ENCODE measurements at regions of chr15 and their contacts with region 1.

Region 1: DNA sequence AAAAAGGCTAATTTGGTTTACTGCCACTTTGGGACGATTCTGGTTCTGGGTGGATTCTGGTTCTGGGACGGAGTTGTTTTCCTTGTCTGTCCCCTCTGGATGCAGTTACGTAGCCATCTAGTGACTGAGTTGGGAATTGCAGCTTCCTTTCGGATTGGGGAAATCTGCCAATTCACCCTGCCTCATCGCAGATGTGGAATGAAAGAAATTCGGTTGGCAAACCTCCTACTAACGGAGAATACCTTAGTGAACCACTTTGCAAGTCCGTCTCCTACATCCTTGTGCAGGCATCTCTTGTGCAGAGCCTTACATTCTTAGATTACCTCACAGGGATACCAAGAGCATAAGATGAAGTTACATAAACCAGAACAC is 31.5 kb upstream of the AP4E1 start:
- DNase-seq: peak; percentile 86
- H3K4me3 ChIP-seq: peak overlapping the region; percentile 13 to 47 (median 36)
- H3K27ac ChIP-seq: peak overlapping the region in 3 of 4 donors; percentile 35 to 62 (median 54)
- H3K4me1 ChIP-seq: peaks cover 0 to 11% (median 3%) of the 10 kb centered on the region in 4 donors
- H3K27me3 ChIP-seq: no peaks in the 10 kb centered on the region
- CTCF ChIP-seq: peak; percentile 89 to 97 (median 94)
- EP300 ChIP-seq: no peak
- POLR2A ChIP-seq: no peak

Region 2: GRCh38 chr15:50675536-50676144 is 201.3 kb before region 1 on chr15:
- intact Hi-C with region 1: loop called (anchors 2 kb)
- DNase-seq: no peak
- H3K4me3 ChIP-seq: no peak overlapping the region
- H3K27ac ChIP-seq: no peak overlapping the region
- H3K4me1 ChIP-seq: peaks cover 0 to 25% (median 12%) of the 10 kb centered on the region in 4 donors
- H3K27me3 ChIP-seq: no peaks in the 10 kb centered on the region
- CTCF ChIP-seq: peak; percentile 34 to 73 (median 64)
- EP300 ChIP-seq: no peak
- POLR2A ChIP-seq: no peak

Measured in sigmoid colon (tissue), 7 donors.